Ascending aorta (tissue), 2 donors: ENCODE measurements at regions of chr2 and their contacts with region 1.

Region 1: GRCh38 chr2:200811336-200812121 is at the start of gene BZW1:
- DNase-seq: peak; percentile 77 to 96
- H3K4me3 ChIP-seq: peak within 1 kb of the TSS; percentile 81 to 97
- H3K27ac ChIP-seq: peak within 1 kb of the TSS; percentile 98
- H3K4me1 ChIP-seq: peaks cover 6 to 40% of the 10 kb centered on the region in 2 donors
- H3K27me3 ChIP-seq: no peaks in the 10 kb centered on the region
- CTCF ChIP-seq: no peak
- total RNA-seq, gene BZW1: 85.4 TPM

Region 2: GRCh38 chr2:200585730-200586643 is 225.5 kb before region 1 on chr2 and contains the start of gene AOX1:
- intact Hi-C with region 1: loop called (anchors 10 kb)
- DNase-seq: peak in 1 of 2 donors; percentile 82
- H3K4me3 ChIP-seq: peak within 1 kb of the TSS; percentile 66 to 74
- H3K27ac ChIP-seq: peak within 1 kb of the TSS; percentile 51 to 85
- H3K4me1 ChIP-seq: peaks cover 0 to 3% of the 10 kb centered on the region in 2 donors
- H3K27me3 ChIP-seq: no peaks in the 10 kb centered on the region
- CTCF ChIP-seq: no peak
- total RNA-seq, gene AOX1: 59.2 TPM

Region 3: GRCh38 chr2:200713003-200713703 is 98.4 kb before region 1 on chr2:
- intact Hi-C with region 1: loop called (anchors 1 kb)
- DNase-seq: peak; percentile 81 to 95
- H3K4me3 ChIP-seq: peak overlapping the region; percentile 37 to 48
- H3K27ac ChIP-seq: peak overlapping the region; percentile 70 to 85
- H3K4me1 ChIP-seq: peaks cover 3% of the 10 kb centered on the region in 2 donors
- H3K27me3 ChIP-seq: no peaks in the 10 kb centered on the region
- CTCF ChIP-seq: peak; percentile 74 to 90 (median 82)

Region 4: GRCh38 chr2:200742426-200742825 is 69.1 kb before region 1 on chr2:
- intact Hi-C with region 1: loop called (anchors 1 kb)
- DNase-seq: peak; percentile 69 to 91
- H3K4me3 ChIP-seq: peak overlapping the region in 1 of 2 donors; percentile 41
- H3K27ac ChIP-seq: peak overlapping the region; percentile 97
- H3K4me1 ChIP-seq: peaks cover 18 to 29% of the 10 kb centered on the region in 2 donors
- H3K27me3 ChIP-seq: no peaks in the 10 kb centered on the region
- CTCF ChIP-seq: no peak

Region 5: DNA sequence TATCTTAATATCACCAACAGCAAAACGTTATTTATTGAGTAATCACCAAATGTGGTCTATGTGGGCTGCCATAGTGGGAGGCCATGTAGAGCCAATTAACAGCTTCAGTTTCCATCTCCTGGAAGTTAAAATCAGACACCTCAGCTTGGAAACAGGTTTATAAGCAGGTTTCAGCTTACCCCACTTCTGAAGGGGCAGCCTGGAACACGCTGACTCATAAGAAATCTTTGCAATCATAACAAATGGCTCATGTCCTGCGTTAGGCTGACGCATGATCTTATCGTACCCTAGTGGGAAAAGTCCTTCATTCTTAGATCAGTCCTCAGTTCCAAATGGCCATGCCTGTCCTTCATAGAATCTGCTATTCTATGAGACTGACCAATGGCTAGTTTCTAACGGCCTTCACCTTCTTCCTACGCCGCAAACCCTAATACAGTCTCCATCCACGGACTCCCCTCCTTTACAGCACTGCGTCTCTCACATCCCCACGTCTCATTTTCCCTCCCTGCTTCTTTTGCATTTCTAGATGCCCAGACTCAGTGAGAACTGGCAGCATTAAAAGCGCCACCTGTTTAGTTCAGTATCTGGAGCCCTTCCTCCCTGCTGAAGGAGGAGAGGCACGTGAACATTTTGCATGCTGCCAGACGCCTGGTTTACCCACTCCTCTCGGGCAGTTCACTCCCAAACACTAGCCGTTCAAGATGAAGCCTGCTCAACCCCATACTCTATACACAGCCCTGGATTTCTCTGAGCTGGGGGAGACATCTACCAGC is 24.0 kb before region 1 on chr2:
- intact Hi-C with region 1: loop called (anchors 1 kb)
- DNase-seq: peak in 1 of 2 donors; percentile 82
- H3K4me3 ChIP-seq: no peak overlapping the region
- H3K27ac ChIP-seq: peak overlapping the region; percentile 47 to 58
- H3K4me1 ChIP-seq: peaks cover 0 to 11% of the 10 kb centered on the region in 2 donors
- H3K27me3 ChIP-seq: no peaks in the 10 kb centered on the region
- CTCF ChIP-seq: no peak